Mucosa of descending colon (tissue), 3 donors: ENCODE measurements at regions of chr21 and their contacts with region 1.

Region 1: DNA sequence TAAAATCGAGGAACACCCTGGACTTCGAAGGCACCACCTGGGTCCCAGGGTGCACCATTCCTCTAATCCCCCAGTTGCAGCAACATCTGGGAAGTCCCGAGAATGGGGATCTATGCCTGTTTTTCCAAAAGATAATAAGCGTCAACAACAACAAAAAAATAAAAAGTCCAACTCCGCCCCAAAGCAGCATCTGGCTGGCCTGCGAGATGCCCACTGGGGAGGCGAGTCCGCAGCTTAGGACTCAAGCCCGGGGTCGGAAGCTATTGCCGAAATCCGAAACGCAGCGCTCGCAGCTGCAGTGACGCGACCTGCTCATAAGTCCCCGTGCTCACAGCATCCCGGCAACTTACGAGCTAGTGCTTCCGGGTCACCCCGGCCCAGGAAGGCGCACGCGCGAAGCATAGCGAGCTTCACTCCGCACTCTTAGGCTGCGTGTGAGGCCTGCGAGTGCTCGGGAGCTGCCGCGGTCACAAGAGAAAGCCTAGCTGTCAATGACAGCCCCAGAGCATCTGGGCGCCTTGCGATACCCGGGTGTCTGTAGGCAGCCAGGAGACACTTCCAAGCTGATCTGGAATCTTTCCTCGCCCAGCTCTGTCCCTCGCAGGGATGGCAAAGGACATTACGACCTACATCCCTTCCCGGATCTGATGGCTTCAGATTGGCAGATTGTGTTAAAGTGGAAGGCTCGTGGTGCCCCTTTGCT is 9.9 kb upstream of the LTN1 start:
- DNase-seq: peak; percentile 94 to 98 (median 96)
- ATAC-seq: peak; percentile 100
- H3K4me3 ChIP-seq: peak overlapping the region; percentile 15
- H3K4me1 ChIP-seq: peaks cover 7% of the 10 kb centered on the region
- CTCF ChIP-seq: no peak

Region 2: DNA sequence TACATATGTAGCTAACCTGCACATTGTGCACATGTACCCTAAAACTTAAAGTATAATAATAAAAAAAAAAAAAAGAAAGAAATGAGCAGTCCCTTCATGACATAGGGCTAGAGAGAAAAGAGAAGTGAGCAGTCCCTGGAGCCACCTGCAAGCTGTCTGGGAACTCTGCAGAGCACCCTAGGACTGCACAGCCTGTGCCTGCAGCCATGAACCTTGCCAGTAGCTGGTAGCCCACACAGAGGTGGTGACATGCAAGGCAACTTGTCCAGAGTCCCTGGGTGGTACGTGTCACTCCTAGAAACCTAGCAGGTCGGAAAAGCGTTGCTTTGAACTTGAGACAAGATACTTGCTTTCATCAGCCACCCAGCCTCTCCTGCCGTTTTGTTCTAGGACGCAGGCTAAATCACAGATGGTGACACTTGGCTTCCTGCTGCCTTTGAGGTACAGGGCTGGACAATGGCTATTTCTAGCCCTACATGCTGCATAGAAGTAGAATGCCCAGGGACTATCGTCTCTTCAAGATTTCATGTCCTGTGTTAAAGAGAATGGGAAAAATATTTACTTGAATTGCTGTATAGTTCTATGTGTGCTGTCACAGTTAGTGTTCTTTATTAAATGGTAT is 270.8 kb before region 1 on chr21:
- intact Hi-C with region 1: no loop called
- DNase-seq: no peak
- ATAC-seq: no peak
- H3K4me3 ChIP-seq: no peak overlapping the region
- H3K4me1 ChIP-seq: no peaks in the 10 kb centered on the region
- CTCF ChIP-seq: no peak

Region 3: GRCh38 chr21:29073222-29074006 is 70.8 kb after region 1 on chr21 and contains the start of gene CCT8:
- intact Hi-C with region 1: loop called in 1 of 2 experiments (anchors 2 kb)
- DNase-seq: peak; percentile 99
- ATAC-seq: peak; percentile 97
- H3K4me3 ChIP-seq: peak within 1 kb of the TSS; percentile 76
- H3K4me1 ChIP-seq: peaks cover 11% of the 10 kb centered on the region
- CTCF ChIP-seq: no peak
- total RNA-seq, gene CCT8: 76.2 to 103 (median 95.1) TPM